ENCODE measurements at regions of chr11 and their contacts with region 1.

Region 1: DNA sequence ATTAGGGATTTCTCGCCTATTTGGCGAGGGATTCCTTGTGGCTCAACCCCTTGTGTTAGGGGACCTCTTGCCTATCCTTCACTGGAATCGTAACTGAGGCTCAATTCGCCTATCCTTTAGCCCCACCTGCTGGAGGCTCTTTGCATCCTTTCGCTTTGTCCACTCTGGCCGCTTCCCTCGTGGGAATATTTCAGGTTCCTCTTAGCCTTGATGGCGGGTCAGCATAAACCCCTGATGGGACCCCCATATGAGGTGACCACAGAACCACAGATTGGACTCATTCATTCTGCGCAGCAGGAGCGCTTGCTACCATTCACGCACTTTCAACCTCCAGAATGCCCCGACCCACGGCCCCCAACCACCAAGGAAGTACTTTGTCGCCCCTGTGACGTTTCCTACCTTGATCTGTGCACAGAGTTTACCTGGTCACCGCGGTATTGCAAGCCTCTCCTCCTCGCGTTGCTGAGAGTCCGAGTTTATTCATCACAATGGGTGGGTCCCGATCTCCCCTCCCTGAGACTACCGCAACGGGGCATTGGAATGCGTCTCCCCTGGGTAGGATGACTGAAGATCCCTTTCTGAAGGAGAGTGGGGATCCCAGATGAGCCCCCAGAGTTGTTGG is at the start of gene OR52N2:
- DNase-seq: peak; percentile 60 to 72 (median 66)
- H3K4me3 ChIP-seq: peak within 1 kb of the TSS; percentile 58 to 83
- H3K4me3 Mint-ChIP-seq: peak within 1 kb of the TSS; percentile 88 to 96 (median 90)
- H3K27ac ChIP-seq: no peak within 1 kb of the TSS
- H3K27ac Mint-ChIP-seq: peak within 1 kb of the TSS in 5 of 7 donors; percentile 6 to 48 (median 40)
- H3K4me1 ChIP-seq: peaks cover 8% of the 10 kb centered on the region
- H3K4me1 Mint-ChIP-seq: peaks cover 7 to 13% (median 12%) of the 10 kb centered on the region in 4 donors
- H3K27me3 ChIP-seq: no peaks in the 10 kb centered on the region
- H3K27me3 Mint-ChIP-seq: peaks cover 13 to 16% of the 10 kb centered on the region in 2 donors
- total RNA-seq, gene OR52N2: not detected

Region 2: DNA sequence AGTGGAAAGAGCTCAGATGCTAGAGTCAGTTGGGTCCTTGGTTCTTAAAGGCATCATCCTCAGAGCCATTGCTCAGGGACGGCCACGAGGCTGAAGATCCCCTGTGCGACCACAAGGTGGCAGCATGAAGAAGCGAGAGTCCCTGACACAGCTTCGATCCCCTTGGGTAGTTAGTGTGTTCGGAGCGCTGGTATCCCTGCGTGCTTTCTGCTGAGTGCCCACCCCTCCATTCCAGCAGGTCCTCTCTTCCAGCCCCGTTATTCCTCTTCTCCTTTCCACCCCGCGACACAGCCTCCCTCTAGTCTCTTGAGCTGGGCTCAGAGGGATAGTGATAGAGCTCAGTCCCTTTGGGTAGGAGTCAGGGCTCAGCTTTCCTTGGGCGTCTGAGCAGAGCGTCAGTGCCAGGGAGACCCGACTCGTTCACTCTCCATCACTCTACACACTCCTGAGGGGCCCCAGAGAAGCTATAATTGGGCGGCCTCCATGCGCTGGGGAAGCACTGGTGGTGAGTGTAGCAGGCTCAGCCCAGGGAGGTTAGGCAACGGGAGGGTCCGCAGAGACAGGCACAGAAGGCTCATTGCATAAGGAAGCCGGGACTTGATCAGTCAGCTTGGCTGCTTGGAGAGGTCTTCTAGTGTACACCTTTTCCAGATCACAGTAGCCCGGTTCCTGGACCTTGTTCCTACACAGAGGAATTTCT is 1171.5 kb before region 1 on chr11 and contains the start of gene OR51D1:
- CTCF ChIA-PET with region 1: interaction called, 17 read pairs
- POLR2A ChIA-PET with region 1: no interaction called
- intact Hi-C with region 1: loop called (anchors 1 kb)
- DNase-seq: peak; percentile 47 to 63 (median 59)
- H3K4me3 ChIP-seq: no peak within 1 kb of the TSS
- H3K4me3 Mint-ChIP-seq: no peak within 1 kb of the TSS
- H3K27ac ChIP-seq: no peak within 1 kb of the TSS
- H3K27ac Mint-ChIP-seq: no peak within 1 kb of the TSS
- H3K4me1 ChIP-seq: no peaks in the 10 kb centered on the region
- H3K4me1 Mint-ChIP-seq: no peaks in the 10 kb centered on the region
- H3K27me3 ChIP-seq: no peaks in the 10 kb centered on the region
- H3K27me3 Mint-ChIP-seq: peaks cover 6 to 9% of the 10 kb centered on the region in 2 donors
- total RNA-seq, gene OR51D1: not detected

Region 3: DNA sequence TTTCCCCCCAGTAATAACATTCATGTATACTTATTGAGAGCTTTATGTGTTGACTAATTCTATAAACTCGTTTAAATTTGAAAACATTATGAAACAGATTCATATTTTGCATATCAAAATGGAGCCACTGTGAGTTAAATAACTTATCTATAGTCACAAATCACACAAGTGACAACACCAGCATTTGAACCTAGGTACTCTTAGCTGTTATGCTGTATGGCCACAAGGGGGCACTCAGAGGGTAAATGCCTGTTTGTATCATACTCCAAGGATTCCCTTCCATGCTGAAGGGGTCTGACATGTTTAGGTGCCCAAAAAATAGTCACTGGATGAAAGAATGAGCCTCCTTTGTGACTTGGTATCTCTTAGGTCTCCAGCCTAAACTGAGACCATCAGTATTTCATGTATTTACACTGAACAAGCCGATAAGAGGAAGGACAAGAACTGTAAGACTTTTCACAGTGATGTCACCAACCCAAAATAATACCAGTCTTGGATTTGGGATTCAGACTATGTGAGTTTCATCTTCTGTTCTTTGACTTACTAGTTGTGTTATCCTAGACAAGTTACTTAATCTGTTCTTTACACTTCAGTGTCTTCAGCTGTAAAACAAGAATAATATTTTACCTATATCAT is 332.3 kb before region 1 on chr11:
- CTCF ChIA-PET with region 1: interaction called, 13 read pairs
- POLR2A ChIA-PET with region 1: no interaction called
- intact Hi-C with region 1: no loop called
- DNase-seq: peak in 4 of 5 donors; percentile 18 to 39 (median 30)
- H3K4me3 ChIP-seq: no peak overlapping the region
- H3K4me3 Mint-ChIP-seq: no peak overlapping the region
- H3K27ac ChIP-seq: no peak overlapping the region
- H3K27ac Mint-ChIP-seq: no peak overlapping the region
- H3K4me1 ChIP-seq: no peaks in the 10 kb centered on the region
- H3K4me1 Mint-ChIP-seq: no peaks in the 10 kb centered on the region
- H3K27me3 ChIP-seq: no peaks in the 10 kb centered on the region
- H3K27me3 Mint-ChIP-seq: peaks cover 7 to 12% of the 10 kb centered on the region in 2 donors

Region 4: DNA sequence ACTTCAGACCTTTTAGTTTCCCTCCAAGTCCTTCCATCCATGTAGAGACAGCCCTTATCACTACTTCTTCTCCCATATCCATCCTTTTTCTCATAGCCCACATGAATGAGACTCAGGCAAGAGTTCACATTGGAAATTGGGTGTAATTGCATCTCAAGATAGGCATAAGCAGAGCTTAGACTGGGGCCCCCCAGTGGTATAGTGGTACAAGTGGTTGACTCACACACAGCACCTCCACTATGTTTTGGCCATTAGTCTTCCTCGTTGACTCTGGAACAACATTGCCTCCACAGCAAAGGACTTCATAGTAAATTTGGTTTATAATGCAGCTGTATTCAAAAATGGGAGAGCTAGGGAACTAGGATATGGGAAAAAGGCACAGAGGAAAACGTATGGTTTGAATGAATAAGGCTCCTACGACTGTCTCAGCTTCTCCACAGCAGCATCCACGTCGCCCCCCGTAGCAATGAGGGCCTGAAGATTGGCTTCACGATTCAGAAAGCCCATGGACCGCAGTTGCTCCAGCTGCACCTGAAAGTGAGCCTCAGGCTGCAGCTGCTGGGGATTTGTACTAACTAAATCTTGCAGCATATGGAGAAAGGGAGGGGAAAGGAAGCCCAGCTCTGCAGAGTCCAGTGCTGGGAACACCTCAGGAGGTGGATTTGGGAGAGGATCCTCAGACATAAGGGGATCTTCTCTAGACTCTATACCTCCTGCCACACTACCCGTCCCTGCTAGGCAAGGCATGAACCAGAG is 301.3 kb before region 1 on chr11:
- CTCF ChIA-PET with region 1: no interaction called
- POLR2A ChIA-PET with region 1: no interaction called
- intact Hi-C with region 1: no loop called
- DNase-seq: no peak
- H3K4me3 ChIP-seq: no peak overlapping the region
- H3K4me3 Mint-ChIP-seq: no peak overlapping the region
- H3K27ac ChIP-seq: no peak overlapping the region
- H3K27ac Mint-ChIP-seq: no peak overlapping the region
- H3K4me1 ChIP-seq: no peaks in the 10 kb centered on the region
- H3K4me1 Mint-ChIP-seq: no peaks in the 10 kb centered on the region
- H3K27me3 ChIP-seq: no peaks in the 10 kb centered on the region
- H3K27me3 Mint-ChIP-seq: peaks cover 8 to 11% of the 10 kb centered on the region in 2 donors

Region 5: GRCh38 chr11:5703741-5704536 is 104.7 kb before region 1 on chr11:
- CTCF ChIA-PET with region 1: no interaction called
- POLR2A ChIA-PET with region 1: no interaction called
- intact Hi-C with region 1: no loop called
- DNase-seq: no peak
- H3K4me3 ChIP-seq: no peak overlapping the region
- H3K4me3 Mint-ChIP-seq: peak overlapping the region in 3 of 8 donors; percentile 24 to 77 (median 41)
- H3K27ac ChIP-seq: no peak overlapping the region
- H3K27ac Mint-ChIP-seq: peak overlapping the region; percentile 30 to 81 (median 75)
- H3K4me1 ChIP-seq: peaks cover 38% of the 10 kb centered on the region
- H3K4me1 Mint-ChIP-seq: peaks cover 20 to 52% (median 30%) of the 10 kb centered on the region in 4 donors
- H3K27me3 ChIP-seq: no peaks in the 10 kb centered on the region
- H3K27me3 Mint-ChIP-seq: no peaks in the 10 kb centered on the region

Region 6: DNA sequence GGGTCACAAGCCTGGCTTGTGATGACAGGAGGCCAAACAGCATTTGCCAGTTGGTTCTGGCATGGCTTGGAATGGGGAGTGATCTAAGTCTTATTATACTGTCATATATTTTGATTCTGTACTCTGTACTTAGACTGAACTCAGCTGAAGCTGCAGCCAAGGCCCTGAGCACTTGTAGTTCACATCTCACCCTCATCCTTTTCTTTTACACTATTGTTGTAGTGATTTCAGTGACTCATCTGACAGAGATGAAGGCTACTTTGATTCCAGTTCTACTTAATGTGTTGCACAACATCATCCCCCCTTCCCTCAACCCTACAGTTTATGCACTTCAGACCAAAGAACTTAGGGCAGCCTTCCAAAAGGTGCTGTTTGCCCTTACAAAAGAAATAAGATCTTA is 71.5 kb before region 1 on chr11:
- CTCF ChIA-PET with region 1: no interaction called
- POLR2A ChIA-PET with region 1: no interaction called
- intact Hi-C with region 1: no loop called
- DNase-seq: no peak
- H3K4me3 ChIP-seq: no peak overlapping the region
- H3K4me3 Mint-ChIP-seq: no peak overlapping the region
- H3K27ac ChIP-seq: no peak overlapping the region
- H3K27ac Mint-ChIP-seq: no peak overlapping the region
- H3K4me1 ChIP-seq: no peaks in the 10 kb centered on the region
- H3K4me1 Mint-ChIP-seq: no peaks in the 10 kb centered on the region
- H3K27me3 ChIP-seq: no peaks in the 10 kb centered on the region
- H3K27me3 Mint-ChIP-seq: peaks cover 0 to 2% of the 10 kb centered on the region in 2 donors

Region 7: DNA sequence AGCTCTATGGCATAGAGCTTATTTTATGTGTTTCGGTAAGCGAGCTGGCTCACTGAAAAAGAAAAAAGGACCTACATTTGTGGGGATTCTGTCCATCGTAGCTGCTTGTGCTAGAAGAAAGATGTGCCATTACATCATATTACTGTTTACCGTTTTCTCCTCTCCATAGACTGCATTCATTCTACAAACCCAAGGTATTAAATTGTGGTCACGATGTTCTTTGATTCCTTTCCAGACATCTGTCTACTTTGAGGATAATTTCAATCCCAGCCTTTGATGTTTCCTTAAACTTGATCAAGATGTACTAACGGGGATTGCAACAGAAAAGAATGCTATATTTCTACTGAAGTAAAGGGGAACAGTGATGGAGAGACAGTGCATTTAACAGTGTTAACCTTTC is 12.1 kb before region 1 on chr11:
- CTCF ChIA-PET with region 1: no interaction called
- POLR2A ChIA-PET with region 1: no interaction called
- intact Hi-C with region 1: no loop called
- DNase-seq: no peak
- H3K4me3 ChIP-seq: no peak overlapping the region
- H3K4me3 Mint-ChIP-seq: no peak overlapping the region
- H3K27ac ChIP-seq: no peak overlapping the region
- H3K27ac Mint-ChIP-seq: no peak overlapping the region
- H3K4me1 ChIP-seq: no peaks in the 10 kb centered on the region
- H3K4me1 Mint-ChIP-seq: no peaks in the 10 kb centered on the region
- H3K27me3 ChIP-seq: no peaks in the 10 kb centered on the region
- H3K27me3 Mint-ChIP-seq: peaks cover 14 to 17% of the 10 kb centered on the region in 2 donors